ENCODE measurements at regions of chr7 and their contacts with region 1.

Region 1: GRCh38 chr7:155298834-155299534 is 1.3 kb downstream of the INSIG1 start:
- DNase-seq: peak; percentile 96
- H3K4me3 ChIP-seq: peak overlapping the region; percentile 50 to 99 (median 91)
- H3K27ac ChIP-seq: peak overlapping the region; percentile 64
- H3K4me1 ChIP-seq: peaks cover 31% of the 10 kb centered on the region
- H3K27me3 ChIP-seq: no peaks in the 10 kb centered on the region
- CTCF ChIP-seq: no peak
- POLR2A ChIP-seq: peak; percentile 52

Region 2: GRCh38 chr7:155069992-155070751 is 228.8 kb before region 1 on chr7 and contains the start of gene HTR5A:
- CTCF ChIA-PET with region 1: no interaction called
- POLR2A ChIA-PET with region 1: no interaction called
- dilution Hi-C with region 1: no loop called
- intact Hi-C with region 1: loop called (anchors 2 kb)
- DNase-seq: peak; percentile 85
- H3K4me3 ChIP-seq: no peak within 1 kb of the TSS
- H3K27ac ChIP-seq: no peak within 1 kb of the TSS
- H3K4me1 ChIP-seq: no peaks in the 10 kb centered on the region
- H3K27me3 ChIP-seq: no peaks in the 10 kb centered on the region
- CTCF ChIP-seq: no peak
- POLR2A ChIP-seq: no peak
- total RNA-seq, gene HTR5A: not detected in 2 replicates

Region 3: GRCh38 chr7:155190688-155191087 is 108.3 kb before region 1 on chr7:
- CTCF ChIA-PET with region 1: interaction called, 19 read pairs
- POLR2A ChIA-PET with region 1: no interaction called
- dilution Hi-C with region 1: no loop called
- intact Hi-C with region 1: loop called (anchors 1 kb)
- DNase-seq: peak; percentile 20
- H3K4me3 ChIP-seq: no peak overlapping the region
- H3K27ac ChIP-seq: no peak overlapping the region
- H3K4me1 ChIP-seq: no peaks in the 10 kb centered on the region
- H3K27me3 ChIP-seq: peaks cover under 1 to 6% of the 10 kb centered on the region in 2 experiments
- CTCF ChIP-seq: peak; percentile 83 to 94
- POLR2A ChIP-seq: no peak

Region 4: GRCh38 chr7:155277690-155277994 is 21.3 kb before region 1 on chr7:
- CTCF ChIA-PET with region 1: no interaction called
- POLR2A ChIA-PET with region 1: interaction called, 3 read pairs
- dilution Hi-C with region 1: no loop called
- intact Hi-C with region 1: loop called (anchors 1 kb)
- DNase-seq: peak; percentile 52
- H3K4me3 ChIP-seq: no peak overlapping the region
- H3K27ac ChIP-seq: no peak overlapping the region
- H3K4me1 ChIP-seq: peaks cover 23% of the 10 kb centered on the region
- H3K27me3 ChIP-seq: peaks cover 2 to 12% of the 10 kb centered on the region in 2 experiments
- CTCF ChIP-seq: no peak
- POLR2A ChIP-seq: no peak

Measured in endothelial cell of umbilical vein (primary cell).